Panc1 (cell line): ENCODE measurements at regions of chr12 and their contacts with region 1.

Region 1: GRCh38 chr12:6825398-6826124 is 2.6 kb upstream of the P3H3 start:
- DNase-seq: no peak
- ATAC-seq: peak; percentile 79
- H3K4me3 ChIP-seq: peak overlapping the region in 1 of 2 experiments; percentile 27; a peak in 1 of 4 replicates
- H3K27ac ChIP-seq: no peak overlapping the region
- H3K4me1 ChIP-seq: peaks cover 10% of the 10 kb centered on the region; the same call in 1 of the 2 replicates
- H3K27me3 ChIP-seq: no peaks in the 10 kb centered on the region
- CTCF ChIP-seq: peak; percentile 90

Region 2: DNA sequence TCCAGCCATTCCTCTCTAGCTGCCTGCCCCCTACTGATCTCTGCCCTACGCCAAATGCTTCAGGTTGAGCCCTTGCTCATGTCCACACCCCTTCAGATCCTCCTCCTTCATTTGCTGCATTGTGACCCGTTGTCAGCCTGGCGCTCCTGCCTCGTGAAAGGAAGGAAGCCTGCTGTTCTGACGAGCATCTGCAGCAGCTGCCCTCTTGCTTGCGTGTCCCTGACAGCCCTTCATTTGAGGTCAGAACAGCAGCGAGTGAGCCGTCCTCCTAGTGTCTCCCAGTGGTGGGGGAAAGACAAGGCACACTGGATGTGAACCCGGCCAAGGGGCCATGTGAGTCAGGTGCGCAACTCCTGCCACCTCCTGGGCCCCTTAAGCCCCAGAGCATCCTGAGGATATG is 121.9 kb before region 1 on chr12:
- CTCF ChIA-PET with region 1: interaction called, 11 read pairs
- POLR2A ChIA-PET with region 1: no interaction called
- in situ Hi-C with region 1: no loop called
- intact Hi-C with region 1: no loop called
- DNase-seq: no peak
- ATAC-seq: peak; percentile 46
- H3K4me3 ChIP-seq: no peak overlapping the region
- H3K27ac ChIP-seq: no peak overlapping the region
- H3K4me1 ChIP-seq: no peaks in the 10 kb centered on the region
- H3K27me3 ChIP-seq: peaks cover 11% of the 10 kb centered on the region
- CTCF ChIP-seq: no peak

Region 3: DNA sequence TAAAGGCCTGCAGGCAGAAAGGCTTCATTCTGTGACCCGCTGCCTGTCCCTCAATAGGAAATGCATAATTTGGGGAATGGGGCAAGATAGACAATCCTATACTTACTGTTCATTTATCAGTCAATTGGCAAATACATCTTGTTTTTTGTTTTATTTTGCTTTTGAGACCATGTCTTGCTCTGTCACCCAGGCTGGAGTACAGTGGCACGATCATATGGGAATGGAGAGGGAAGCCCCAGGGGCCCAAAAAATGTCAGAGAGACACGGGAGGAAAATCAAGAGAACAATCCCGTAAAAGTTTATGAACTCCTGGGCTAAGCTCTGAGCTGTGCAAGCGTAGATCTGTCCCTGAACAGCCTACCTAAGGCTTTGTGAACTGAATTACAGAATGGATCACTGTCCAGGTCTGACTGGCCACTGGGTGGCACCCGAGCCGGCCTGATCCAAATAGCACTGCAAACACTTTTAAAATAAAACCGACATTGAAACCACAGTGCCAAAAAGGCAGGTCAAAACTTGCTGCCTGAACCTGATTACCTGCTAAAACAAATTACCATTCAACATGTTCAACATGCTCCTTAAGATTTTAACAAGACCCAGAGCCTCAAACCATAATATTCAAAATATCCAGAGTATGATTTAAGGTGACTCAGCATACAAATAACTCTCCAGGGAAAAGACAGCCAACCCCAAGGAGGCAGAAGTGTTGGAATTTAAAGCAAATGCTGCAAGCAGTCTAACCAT is 89.9 kb before region 1 on chr12:
- CTCF ChIA-PET with region 1: no interaction called
- POLR2A ChIA-PET with region 1: no interaction called
- in situ Hi-C with region 1: no loop called
- intact Hi-C with region 1: loop called (anchors 1 kb)
- DNase-seq: peak; percentile 32
- ATAC-seq: peak; percentile 100
- H3K4me3 ChIP-seq: no peak overlapping the region
- H3K27ac ChIP-seq: peak overlapping the region; percentile 66
- H3K4me1 ChIP-seq: peaks cover 7% of the 10 kb centered on the region; the same call in 1 of the 2 replicates
- H3K27me3 ChIP-seq: no peaks in the 10 kb centered on the region
- CTCF ChIP-seq: peak; percentile 85

Region 4: DNA sequence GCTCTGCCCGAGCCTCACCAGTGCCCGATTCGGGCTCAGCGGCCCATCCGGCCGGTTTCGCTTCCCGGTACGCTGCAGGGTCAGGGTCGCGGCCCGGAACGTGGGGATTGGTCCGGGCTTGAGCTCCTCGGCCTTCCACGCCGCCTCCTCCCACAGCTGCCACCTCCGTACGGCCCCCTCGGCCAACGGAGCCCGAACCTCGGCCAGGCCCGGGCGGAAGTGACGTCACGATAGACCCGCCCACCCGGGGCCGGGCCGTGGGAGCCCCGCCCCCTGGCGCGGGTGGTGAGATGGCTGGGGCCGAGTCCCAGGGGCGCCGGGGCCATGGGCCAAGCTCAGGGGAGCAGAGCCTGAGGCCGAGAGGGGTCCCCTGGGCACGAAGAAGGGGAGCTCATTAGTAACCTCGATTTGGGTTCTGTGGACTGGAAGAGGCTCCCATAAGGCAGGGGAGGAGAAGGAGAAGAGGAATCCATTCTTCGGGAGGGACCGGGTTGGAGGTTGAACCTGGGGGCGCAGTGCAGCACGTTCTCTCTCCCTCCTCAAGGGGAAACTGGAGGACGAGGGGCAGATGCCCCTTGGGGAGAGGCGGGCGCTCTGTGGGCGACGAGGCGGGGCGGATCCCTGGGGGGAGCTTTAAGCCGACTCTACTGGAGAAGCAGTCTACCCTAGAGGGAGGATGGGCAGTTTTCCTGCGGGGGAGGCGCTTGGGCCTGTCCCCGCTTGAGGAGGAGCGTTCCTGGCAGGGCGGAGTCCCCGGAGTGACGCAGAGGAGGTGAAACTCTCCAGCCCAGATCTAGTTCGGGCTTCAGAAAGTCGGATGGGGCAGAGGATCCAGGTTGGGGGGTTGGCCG is 72.4 kb before region 1 on chr12 and contains the start of gene MLF2:
- CTCF ChIA-PET with region 1: interaction called, 5 read pairs
- POLR2A ChIA-PET with region 1: no interaction called
- in situ Hi-C with region 1: no loop called
- intact Hi-C with region 1: loop called (anchors 5 kb)
- DNase-seq: peak; percentile 91
- ATAC-seq: peak; percentile 95
- H3K4me3 ChIP-seq: peak within 1 kb of the TSS; percentile 85
- H3K27ac ChIP-seq: peak within 1 kb of the TSS; percentile 94
- H3K4me1 ChIP-seq: peaks cover 14% of the 10 kb centered on the region
- H3K27me3 ChIP-seq: no peaks in the 10 kb centered on the region
- CTCF ChIP-seq: no peak
- total RNA-seq, gene MLF2: 175 TPM